GM12878 (cell line): ENCODE measurements at regions of chr11 and their contacts with region 1.

Region 1: DNA sequence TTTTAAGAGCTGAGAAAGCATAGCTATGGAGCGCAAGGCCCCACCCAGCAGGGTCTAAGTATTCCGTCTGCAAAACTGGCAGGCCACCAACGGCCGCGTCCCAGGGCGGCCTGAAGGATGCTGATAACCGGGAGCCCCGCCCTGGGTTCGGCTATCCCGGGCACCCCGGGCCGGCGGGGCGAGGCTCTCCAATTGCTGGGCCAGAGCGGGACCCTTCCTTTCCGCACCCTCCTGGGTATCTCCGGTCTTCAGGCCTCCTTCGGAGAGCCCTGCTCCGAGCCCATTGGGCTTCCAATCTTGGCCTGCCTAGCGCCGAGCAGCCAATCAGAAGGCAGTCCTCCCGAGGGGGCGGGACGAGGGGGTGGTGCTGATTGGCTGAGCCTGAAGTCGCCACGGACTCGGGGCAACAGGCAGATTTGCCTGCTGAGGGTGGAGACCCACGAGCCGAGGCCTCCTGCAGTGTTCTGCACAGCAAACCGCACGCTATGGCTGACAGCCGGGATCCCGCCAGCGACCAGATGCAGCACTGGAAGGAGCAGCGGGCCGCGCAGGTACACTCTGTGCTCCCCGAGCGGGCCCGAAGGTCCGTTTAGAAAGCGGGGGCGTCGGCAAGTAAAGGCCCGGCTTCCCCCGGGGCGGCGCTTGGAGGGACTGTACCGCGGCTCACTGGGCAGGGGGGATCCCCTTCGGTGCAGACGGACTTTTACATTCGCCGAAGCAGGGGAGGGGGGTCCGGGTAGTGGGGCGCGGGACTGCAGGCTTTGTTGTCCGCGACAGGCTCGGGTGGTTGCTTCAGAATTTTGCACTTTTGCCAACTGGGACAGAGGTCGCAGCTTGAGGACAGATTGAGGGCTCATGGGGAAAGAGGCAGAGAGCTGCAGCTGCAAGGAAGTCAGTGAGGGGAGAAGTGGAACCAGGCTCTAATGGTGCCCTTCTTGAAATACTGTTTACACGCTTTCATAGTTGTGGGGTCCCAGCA is at the start of gene CAT:
- DNase-seq: peak; percentile 93
- ATAC-seq: peak; percentile 98
- H3K4me3 ChIP-seq: peak within 1 kb of the TSS; percentile 86
- H3K27ac ChIP-seq: peak within 1 kb of the TSS; percentile 91
- H3K4me1 ChIP-seq: peaks cover 17% of the 10 kb centered on the region
- H3K27me3 ChIP-seq: no peaks in the 10 kb centered on the region
- CTCF ChIP-seq: no peak
- EP300 ChIP-seq: no peak
- POLR2A ChIP-seq: peak; percentile 94
- RAD21 ChIP-seq: no peak
- polyA plus RNA-seq, gene CAT: 25.1 to 30.5 TPM

Region 2: GRCh38 chr11:34449013-34449412 is 10.2 kb after region 1 on chr11:
- CTCF ChIA-PET with region 1: interaction called, 13 read pairs
- POLR2A ChIA-PET with region 1: interaction called, 5 read pairs
- RAD21 ChIA-PET with region 1: interaction called, 8 read pairs
- SMC1A ChIA-PET with region 1: interaction called, 17 read pairs
- in situ Hi-C with region 1: no loop called
- intact Hi-C with region 1: no loop called
- DNase-seq: no peak
- ATAC-seq: peak; percentile 52
- H3K4me3 ChIP-seq: no peak overlapping the region
- H3K27ac ChIP-seq: no peak overlapping the region
- H3K4me1 ChIP-seq: peaks cover 17% of the 10 kb centered on the region
- H3K27me3 ChIP-seq: no peaks in the 10 kb centered on the region
- CTCF ChIP-seq: no peak
- EP300 ChIP-seq: no peak
- POLR2A ChIP-seq: no peak
- RAD21 ChIP-seq: no peak